ENCODE measurements at regions of chr5 and their contacts with region 1.

Region 1: GRCh38 chr5:43540746-43541145 is 16.1 kb downstream of the PAIP1 start:
- DNase-seq: no peak
- ATAC-seq: no peak
- H3K4me3 ChIP-seq: no peak overlapping the region
- H3K27ac ChIP-seq: no peak overlapping the region
- H3K4me1 ChIP-seq: peaks cover 0 to 3% (median 0%) of the 10 kb centered on the region in 12 donors
- H3K27me3 ChIP-seq: no peaks in the 10 kb centered on the region
- CTCF ChIP-seq: no peak
- POLR2A ChIP-seq: no peak

Region 2: DNA sequence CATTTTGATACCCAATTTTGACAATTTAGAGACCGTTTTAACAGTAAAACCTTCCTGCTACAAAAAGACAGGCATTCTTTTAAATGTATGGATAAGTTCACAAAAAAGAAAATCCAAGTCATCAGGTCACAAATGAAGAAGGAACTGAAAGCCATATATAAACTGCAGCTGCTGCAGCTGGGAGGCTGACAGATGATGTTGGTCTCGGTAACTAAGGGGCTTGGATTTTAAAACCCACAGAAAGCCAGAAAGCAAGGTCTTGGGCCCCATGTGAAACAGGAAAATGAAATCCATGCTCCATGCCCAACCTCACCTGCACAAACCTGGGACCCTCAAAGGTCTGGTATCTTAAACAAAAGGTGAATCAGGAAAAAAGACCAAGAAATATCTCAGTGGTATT is 10.1 kb before region 1 on chr5:
- intact Hi-C with region 1: loop called in 1 of 10 experiments (anchors 1 kb)
- DNase-seq: no peak
- ATAC-seq: no peak
- H3K4me3 ChIP-seq: no peak overlapping the region
- H3K27ac ChIP-seq: no peak overlapping the region
- H3K4me1 ChIP-seq: no peaks in the 10 kb centered on the region
- H3K27me3 ChIP-seq: no peaks in the 10 kb centered on the region
- CTCF ChIP-seq: no peak
- POLR2A ChIP-seq: no peak

Measured in heart left ventricle (tissue), 16 donors.